Activated B cell treated with CpG ODN at 0.5 μM for 24 hours (primary cell): ENCODE measurements at regions of chr2 and their contacts with region 1.

Region 1: DNA sequence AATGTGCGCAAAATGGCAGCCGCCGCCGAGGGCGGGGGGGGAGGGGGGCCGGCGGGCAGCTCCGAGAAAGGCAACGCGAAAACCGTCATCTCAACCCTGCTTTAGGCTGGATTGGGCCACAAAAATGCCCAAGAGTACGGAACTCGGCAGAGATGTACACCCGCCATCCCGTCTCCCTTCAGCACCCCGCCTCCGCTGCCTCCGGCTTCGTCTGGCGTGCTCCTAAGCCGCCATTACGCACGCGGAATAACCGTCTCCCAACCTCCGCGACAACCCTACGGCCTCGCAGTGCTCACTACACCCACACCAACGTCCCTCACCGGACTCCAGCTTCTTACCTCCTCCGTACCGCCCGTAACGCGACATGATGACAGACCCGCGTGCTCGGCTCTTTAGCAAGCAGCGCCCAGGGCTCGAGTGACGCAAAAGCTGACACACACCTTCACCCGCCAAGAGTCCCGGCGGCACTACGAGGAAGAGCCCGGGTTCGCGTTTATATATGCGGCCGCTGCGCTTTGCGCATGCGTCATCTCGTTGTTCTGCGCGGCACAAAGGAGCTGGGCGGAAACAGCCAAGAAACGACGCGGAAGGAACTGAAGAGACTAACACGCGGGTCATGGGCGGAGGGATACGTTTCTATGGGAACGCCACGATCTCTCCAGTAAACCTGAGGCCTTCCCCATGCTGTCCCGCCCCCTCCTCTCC is at the start of gene SRSF7:
- DNase-seq: peak; percentile 98
- ATAC-seq: peak; percentile 75
- H3K4me3 Mint-ChIP-seq: peak within 1 kb of the TSS; percentile 98
- H3K27ac Mint-ChIP-seq: peak within 1 kb of the TSS; percentile 99
- H3K4me1 Mint-ChIP-seq: peaks cover 59% of the 10 kb centered on the region
- H3K27me3 Mint-ChIP-seq: no peaks in the 10 kb centered on the region
- CTCF ChIP-seq: no peak
- total RNA-seq, gene SRSF7: 247 and 254 TPM in 2 replicates

Region 2: DNA sequence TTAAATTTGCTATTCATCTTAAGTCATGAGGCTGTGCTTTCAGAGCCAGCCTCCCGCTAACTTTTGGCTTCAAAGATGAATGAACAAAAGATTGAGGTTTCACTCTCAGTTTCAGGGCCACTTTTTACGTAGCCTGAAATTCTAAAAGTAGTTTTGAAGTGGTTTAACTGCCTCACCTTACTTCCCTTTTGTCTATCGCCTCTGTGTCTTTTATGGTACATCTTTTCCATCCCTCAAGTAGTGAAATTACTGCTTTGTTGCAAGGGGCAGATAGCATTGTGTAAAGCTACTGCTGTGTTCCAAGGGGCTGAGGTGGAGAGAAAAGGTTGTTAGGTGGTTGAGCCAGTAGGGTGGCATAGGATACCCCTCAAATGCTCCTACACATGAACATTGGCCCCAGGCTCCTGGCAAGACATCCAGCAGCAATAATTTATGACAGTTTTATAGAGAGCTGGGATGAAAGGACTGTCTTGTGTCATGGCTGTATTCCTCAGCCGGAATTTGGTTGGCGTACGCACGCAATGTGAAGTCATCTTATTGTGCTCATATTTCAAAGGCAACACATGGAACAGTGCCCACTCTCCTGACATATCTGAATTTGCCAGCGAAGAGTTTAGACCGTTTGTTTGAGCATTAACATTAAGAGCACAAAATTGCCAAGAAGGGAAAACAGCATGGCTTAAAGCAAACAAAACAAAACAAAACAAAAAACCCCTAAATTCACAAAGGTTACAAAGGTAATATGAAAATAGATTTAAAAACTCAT is 1374.4 kb before region 1 on chr2:
- CTCF ChIA-PET with region 1: no interaction called
- POLR2A ChIA-PET with region 1: no interaction called
- intact Hi-C with region 1: loop called (anchors 5 kb)
- DNase-seq: no peak
- ATAC-seq: peak; percentile 71
- H3K4me3 Mint-ChIP-seq: peak overlapping the region; percentile 80
- H3K27ac Mint-ChIP-seq: peak overlapping the region; percentile 83
- H3K4me1 Mint-ChIP-seq: peaks cover 46% of the 10 kb centered on the region
- H3K27me3 Mint-ChIP-seq: no peaks in the 10 kb centered on the region
- CTCF ChIP-seq: no peak

Region 3: DNA sequence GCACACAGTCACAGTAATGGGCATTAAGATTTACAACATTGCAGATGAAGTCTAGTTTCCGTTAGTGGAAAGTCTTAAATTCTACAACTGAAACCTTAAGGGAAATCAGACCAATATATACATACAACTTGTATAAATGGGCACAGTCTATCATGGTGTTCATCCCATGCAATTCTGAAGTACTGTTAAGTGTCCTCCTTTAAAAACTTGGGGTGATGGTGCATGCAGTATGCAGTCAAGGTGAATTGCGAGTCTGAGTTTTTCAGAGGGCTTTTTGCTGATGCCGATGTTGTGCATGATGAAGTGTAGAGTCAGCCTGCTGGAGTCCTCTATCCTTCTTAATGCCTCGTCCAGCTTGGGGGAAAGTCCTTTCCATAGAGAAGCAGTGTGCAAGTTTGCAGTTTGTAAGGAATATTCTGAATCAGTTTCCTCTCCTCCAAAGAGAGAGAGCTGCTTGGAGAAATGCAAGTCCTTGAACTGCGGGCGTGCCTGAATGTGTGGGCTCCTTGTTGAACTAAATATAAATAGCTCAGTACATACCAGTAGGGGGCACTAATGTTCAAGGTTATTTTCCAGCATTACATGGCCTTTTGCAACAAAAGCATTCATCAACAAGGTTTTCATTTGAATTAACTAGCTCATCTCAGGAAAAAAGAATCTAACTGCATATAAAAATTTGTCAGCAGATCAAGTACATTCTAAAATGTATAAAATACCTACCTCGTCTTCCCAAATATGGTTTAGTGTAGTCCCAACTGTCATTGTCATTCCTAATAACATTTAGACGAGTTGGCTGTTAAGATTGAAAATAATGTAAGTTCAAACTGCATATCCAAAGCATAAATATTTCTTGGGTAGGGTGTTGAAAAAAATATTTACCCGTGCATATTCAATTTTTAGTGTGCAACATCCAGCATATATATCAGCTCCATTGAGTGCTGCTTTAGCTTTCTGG is 169.6 kb before region 1 on chr2:
- CTCF ChIA-PET with region 1: interaction called, 9 read pairs
- POLR2A ChIA-PET with region 1: interaction called, 12 read pairs
- intact Hi-C with region 1: no loop called
- DNase-seq: no peak
- ATAC-seq: peak; percentile 71
- H3K4me3 Mint-ChIP-seq: no peak overlapping the region
- H3K27ac Mint-ChIP-seq: no peak overlapping the region
- H3K4me1 Mint-ChIP-seq: no peaks in the 10 kb centered on the region
- H3K27me3 Mint-ChIP-seq: peaks cover 15% of the 10 kb centered on the region
- CTCF ChIP-seq: no peak

Region 4: DNA sequence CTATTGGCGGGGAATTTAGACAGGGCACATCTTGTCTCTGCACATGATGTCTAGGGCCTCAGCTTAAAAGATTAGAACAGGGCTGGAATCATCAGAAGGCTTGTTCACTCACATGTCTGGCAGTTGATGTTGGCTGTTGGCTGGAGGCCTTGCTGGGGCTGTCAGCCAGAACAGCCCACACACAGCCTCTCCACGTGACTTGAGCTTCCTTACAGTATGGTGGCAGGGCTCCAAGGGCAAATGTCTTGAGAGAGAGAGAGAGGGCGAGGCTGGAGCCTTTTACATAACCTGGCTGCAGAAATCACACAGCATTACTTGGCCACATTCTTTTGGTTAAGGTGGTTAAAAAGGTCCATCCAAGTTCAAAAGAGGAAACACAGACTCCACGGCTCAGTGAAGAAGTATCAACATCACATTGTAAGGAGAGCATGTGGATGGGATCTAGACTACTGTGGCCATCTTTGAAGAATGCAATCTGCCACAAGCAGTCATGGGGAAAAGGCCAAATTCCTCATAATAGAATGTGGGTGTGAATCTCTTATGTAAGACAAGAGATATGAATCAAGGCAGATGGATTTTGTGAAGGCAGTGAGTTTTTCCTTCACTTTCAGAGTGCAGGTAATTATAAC is 30.3 kb before region 1 on chr2:
- CTCF ChIA-PET with region 1: no interaction called
- POLR2A ChIA-PET with region 1: interaction called, 11 read pairs
- intact Hi-C with region 1: no loop called
- DNase-seq: no peak
- ATAC-seq: no peak
- H3K4me3 Mint-ChIP-seq: no peak overlapping the region
- H3K27ac Mint-ChIP-seq: no peak overlapping the region
- H3K4me1 Mint-ChIP-seq: peaks cover 32% of the 10 kb centered on the region
- H3K27me3 Mint-ChIP-seq: no peaks in the 10 kb centered on the region
- CTCF ChIP-seq: no peak

Region 5: GRCh38 chr2:38806015-38806732 is 55.1 kb after region 1 on chr2:
- CTCF ChIA-PET with region 1: no interaction called
- POLR2A ChIA-PET with region 1: interaction called, 29 read pairs
- intact Hi-C with region 1: no loop called
- DNase-seq: no peak
- ATAC-seq: peak; percentile 50
- H3K4me3 Mint-ChIP-seq: peak overlapping the region; percentile 36
- H3K27ac Mint-ChIP-seq: peak overlapping the region; percentile 35
- H3K4me1 Mint-ChIP-seq: no peaks in the 10 kb centered on the region
- H3K27me3 Mint-ChIP-seq: no peaks in the 10 kb centered on the region
- CTCF ChIP-seq: no peak

Region 6: GRCh38 chr2:38959938-38960608 is 209.0 kb after region 1 on chr2:
- CTCF ChIA-PET with region 1: no interaction called
- POLR2A ChIA-PET with region 1: interaction called, 12 read pairs
- intact Hi-C with region 1: no loop called
- DNase-seq: peak; percentile 46
- ATAC-seq: peak; percentile 98
- H3K4me3 Mint-ChIP-seq: peak overlapping the region; percentile 70
- H3K27ac Mint-ChIP-seq: no peak overlapping the region
- H3K4me1 Mint-ChIP-seq: no peaks in the 10 kb centered on the region
- H3K27me3 Mint-ChIP-seq: peaks cover 25% of the 10 kb centered on the region
- CTCF ChIP-seq: no peak